Left cardiac atrium (tissue), 4 donors: ENCODE measurements at regions of chr11 and their contacts with region 1.

Region 1: GRCh38 chr11:67119585-67120391 is 725 bp downstream of the KDM2A start:
- DNase-seq: peak; percentile 37
- ATAC-seq: peak in 1 of 2 donors; percentile 5

Region 2: DNA sequence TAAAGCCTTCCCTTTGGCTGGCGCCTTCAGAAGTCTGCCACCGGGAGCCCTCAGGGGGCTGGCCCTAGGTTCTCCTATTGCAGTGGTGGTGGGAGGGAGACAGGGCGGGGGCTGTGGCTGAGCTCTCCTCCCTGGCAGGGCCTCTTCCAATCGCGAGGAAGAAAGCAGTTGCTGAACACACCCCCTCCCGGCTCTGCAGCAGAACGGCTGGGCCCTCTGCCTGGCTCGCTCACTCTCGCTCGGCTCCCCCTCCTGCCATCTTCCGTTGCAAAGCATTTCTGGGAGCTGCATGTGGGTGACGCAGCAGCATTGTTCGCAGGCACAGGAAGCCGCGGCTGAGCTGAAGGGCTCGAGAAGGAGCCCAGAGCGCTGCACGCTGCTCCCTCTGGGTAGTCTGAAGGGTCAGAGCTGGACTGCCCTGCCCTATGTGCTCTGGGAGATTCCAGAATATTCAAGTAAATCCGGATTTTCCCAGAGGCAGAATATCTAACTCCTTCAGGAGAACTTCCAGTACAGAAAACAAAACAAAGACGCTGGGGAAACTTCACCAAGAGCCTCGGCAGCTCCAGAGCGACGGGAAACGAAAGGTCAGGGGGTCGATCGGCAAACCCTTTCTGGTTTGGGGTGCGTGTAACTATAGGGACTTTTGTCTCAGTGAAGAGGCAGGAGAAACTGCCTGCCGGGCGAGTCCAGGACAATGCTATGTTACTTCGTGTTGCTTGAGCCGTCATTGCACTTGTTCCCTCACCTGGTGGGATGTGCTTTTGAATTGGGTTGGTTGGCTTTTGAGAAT is 120.2 kb after region 1 on chr11:
- intact Hi-C with region 1: loop called in 1 of 2 experiments (anchors 10 kb)
- DNase-seq: peak; percentile 98
- ATAC-seq: peak; percentile 98